ENCODE measurements at regions of chr11 and their contacts with region 1.

Region 1: DNA sequence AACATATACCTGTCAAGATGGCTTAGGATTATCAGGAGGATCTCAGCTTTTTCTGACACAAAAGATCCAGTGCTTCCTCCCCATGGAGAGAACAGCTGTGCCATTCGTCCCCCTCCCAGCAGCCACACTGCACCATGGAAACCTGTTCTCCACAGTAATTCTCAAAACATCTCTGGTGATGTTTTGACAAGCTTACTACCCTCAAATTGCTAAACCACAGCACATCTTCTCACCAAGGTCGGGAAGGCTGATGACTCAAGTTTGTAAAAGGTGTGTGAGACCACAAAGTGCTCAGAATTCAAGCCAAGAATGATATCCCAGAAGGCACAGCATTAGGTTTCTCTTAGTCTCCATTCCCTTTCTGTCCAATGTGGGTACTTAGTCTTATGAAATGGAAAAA is 3.9 kb upstream of the RAB38 start:
- DNase-seq: peak; percentile 94
- ATAC-seq: peak; percentile 89
- H3K4me3 ChIP-seq: no peak overlapping the region
- H3K27ac ChIP-seq: peak overlapping the region; percentile 54
- H3K4me1 ChIP-seq: peaks cover 24% of the 10 kb centered on the region
- H3K27me3 ChIP-seq: no peaks in the 10 kb centered on the region
- CTCF ChIP-seq: no peak

Region 2: GRCh38 chr11:88051396-88051795 is 127.7 kb before region 1 on chr11:
- CTCF ChIA-PET with region 1: no interaction called
- POLR2A ChIA-PET with region 1: no interaction called
- intact Hi-C with region 1: loop called (anchors 1 kb)
- DNase-seq: peak; percentile 91
- ATAC-seq: peak; percentile 80
- H3K4me3 ChIP-seq: peak overlapping the region; percentile 7; the same call in 1 of the 2 replicates
- H3K27ac ChIP-seq: peak overlapping the region; percentile 85
- H3K4me1 ChIP-seq: peaks cover 35% of the 10 kb centered on the region
- H3K27me3 ChIP-seq: no peaks in the 10 kb centered on the region
- CTCF ChIP-seq: no peak

Measured in PC-3 (cell line).